AG04450 (cell line): ENCODE measurements at regions of chr2 and their contacts with region 1.

Region 1: GRCh38 chr2:1715184-1716013 is 28.9 kb downstream of the PXDN start:
- DNase-seq: no peak
- H3K4me3 ChIP-seq: no peak overlapping the region
- H3K27ac ChIP-seq: peak overlapping the region; percentile 31
- H3K27me3 ChIP-seq: no peaks in the 10 kb centered on the region
- CTCF ChIP-seq: no peak

Region 2: GRCh38 chr2:2896011-2896410 is 1180.6 kb after region 1 on chr2:
- CTCF ChIA-PET with region 1: no interaction called
- POLR2A ChIA-PET with region 1: interaction called, 14 read pairs
- DNase-seq: no peak
- H3K4me3 ChIP-seq: no peak overlapping the region
- H3K27ac ChIP-seq: no peak overlapping the region
- H3K27me3 ChIP-seq: no peaks in the 10 kb centered on the region
- CTCF ChIP-seq: no peak

Region 3: DNA sequence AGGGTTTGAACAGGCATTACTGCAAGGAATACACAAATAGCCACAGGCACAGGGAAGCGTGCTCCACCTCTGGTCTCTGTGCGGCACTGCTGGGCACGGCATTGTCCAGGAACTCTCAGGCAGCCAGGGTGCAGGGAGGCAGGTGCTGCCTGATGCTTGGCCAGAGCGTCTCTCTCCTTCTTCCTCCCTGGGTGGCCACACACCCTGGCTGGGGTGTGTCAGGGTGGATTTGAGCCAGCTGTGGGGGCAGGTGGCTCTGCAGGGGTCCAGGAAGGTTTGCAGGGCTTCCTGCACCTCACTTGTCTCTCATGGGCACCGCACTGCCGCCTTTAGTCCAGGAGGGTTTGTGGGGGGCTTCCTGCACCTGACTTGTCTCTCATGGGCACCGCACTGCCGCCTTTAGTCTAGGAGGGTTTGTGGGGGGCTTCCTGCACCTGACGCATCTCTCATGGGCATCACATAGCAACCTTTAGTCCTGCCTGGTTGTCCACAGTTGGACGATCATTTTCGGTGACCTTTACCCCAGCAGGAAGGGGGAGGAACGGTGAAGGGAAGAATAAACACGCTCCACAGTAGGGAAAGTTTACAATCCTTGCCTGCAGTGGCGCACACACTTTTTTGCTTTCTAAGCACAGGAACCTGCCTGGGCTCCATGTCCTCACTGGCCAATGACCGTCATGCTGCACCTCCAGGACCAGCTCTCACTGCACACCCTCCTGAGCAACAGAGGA is 1329.4 kb after region 1 on chr2:
- CTCF ChIA-PET with region 1: no interaction called
- POLR2A ChIA-PET with region 1: no interaction called
- DNase-seq: no peak
- H3K4me3 ChIP-seq: no peak overlapping the region
- H3K27ac ChIP-seq: no peak overlapping the region
- H3K27me3 ChIP-seq: no peaks in the 10 kb centered on the region
- CTCF ChIP-seq: no peak